ENCODE measurements at regions of chr1 and their contacts with region 1.

Region 1: GRCh38 chr1:165367375-165367993 is 11.0 kb upstream of the LMX1A start:
- DNase-seq: peak; percentile 74 to 79 (median 77)
- ATAC-seq: peak in 3 of 4 donors; percentile 53 to 70 (median 59)
- H3K4me3 ChIP-seq: no peak overlapping the region
- H3K27ac ChIP-seq: no peak overlapping the region
- H3K4me1 ChIP-seq: peaks cover 0 to 17% (median 3%) of the 10 kb centered on the region in 12 donors
- H3K27me3 ChIP-seq: peaks cover 0 to 32% (median 0%) of the 10 kb centered on the region in 9 donors
- CTCF ChIP-seq: peak; percentile 88 to 97 (median 94)
- POLR2A ChIP-seq: no peak

Region 2: DNA sequence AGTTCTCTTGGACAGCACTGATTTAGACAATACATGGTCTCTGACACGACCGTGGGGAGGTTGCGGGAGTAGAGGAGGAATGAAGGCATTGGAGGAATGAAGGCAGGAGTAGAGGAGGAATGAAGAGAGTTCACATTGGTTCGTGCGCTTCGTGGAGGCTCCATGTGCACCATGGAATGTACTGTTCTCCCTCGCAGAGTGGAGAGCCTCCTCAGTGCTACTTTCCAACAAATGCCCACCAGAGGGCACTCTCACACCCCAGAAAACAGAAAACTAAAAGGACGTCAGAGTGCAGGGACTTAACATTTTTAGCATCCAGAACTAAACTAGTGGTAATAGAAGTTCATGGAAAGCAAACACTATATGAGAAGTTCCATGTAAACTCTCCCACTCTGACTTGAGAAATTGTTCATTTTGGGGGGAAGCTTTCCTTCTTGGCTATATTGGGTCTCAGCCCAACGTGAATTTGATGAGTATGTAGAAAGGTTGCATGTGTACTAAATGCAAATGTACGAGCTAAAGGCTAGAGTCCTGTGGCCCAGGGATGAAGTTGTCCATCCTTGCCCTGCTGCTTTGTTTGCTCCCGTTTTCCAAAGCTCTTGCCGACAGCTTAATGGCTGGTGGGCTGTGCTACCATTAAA is 222.6 kb before region 1 on chr1:
- intact Hi-C with region 1: loop called (anchors 2 to 10 kb)
- DNase-seq: peak in 4 of 5 donors; percentile 16 to 37 (median 32)
- ATAC-seq: peak in 3 of 4 donors; percentile 62 to 80 (median 72)
- H3K4me3 ChIP-seq: no peak overlapping the region
- H3K27ac ChIP-seq: no peak overlapping the region
- H3K4me1 ChIP-seq: no peaks in the 10 kb centered on the region
- H3K27me3 ChIP-seq: peaks cover 0 to 49% (median 10%) of the 10 kb centered on the region in 9 donors
- CTCF ChIP-seq: peak; percentile 53 to 79 (median 68)
- POLR2A ChIP-seq: no peak

Region 3: GRCh38 chr1:165152727-165153126 is 214.8 kb before region 1 on chr1:
- intact Hi-C with region 1: loop called in 8 of 10 experiments (anchors 5 to 10 kb)
- DNase-seq: no peak
- ATAC-seq: peak in 1 of 4 donors; percentile 41
- H3K4me3 ChIP-seq: no peak overlapping the region
- H3K27ac ChIP-seq: no peak overlapping the region
- H3K4me1 ChIP-seq: no peaks in the 10 kb centered on the region
- H3K27me3 ChIP-seq: peaks cover 0 to 9% (median 0%) of the 10 kb centered on the region in 9 donors
- CTCF ChIP-seq: peak in 7 of 12 donors; percentile 4 to 27 (median 21)
- POLR2A ChIP-seq: no peak

Region 4: GRCh38 chr1:165257969-165258459 is 109.5 kb before region 1 on chr1:
- intact Hi-C with region 1: loop called in 4 of 10 experiments (anchors 5 to 10 kb)
- DNase-seq: peak in 4 of 5 donors; percentile 56 to 74 (median 64)
- ATAC-seq: peak; percentile 21 to 61 (median 52)
- H3K4me3 ChIP-seq: no peak overlapping the region
- H3K27ac ChIP-seq: no peak overlapping the region
- H3K4me1 ChIP-seq: peaks cover 0 to 4% (median 0%) of the 10 kb centered on the region in 12 donors
- H3K27me3 ChIP-seq: peaks cover 0 to 25% (median 0%) of the 10 kb centered on the region in 9 donors
- CTCF ChIP-seq: peak; percentile 44 to 69 (median 60)
- POLR2A ChIP-seq: no peak

Region 5: DNA sequence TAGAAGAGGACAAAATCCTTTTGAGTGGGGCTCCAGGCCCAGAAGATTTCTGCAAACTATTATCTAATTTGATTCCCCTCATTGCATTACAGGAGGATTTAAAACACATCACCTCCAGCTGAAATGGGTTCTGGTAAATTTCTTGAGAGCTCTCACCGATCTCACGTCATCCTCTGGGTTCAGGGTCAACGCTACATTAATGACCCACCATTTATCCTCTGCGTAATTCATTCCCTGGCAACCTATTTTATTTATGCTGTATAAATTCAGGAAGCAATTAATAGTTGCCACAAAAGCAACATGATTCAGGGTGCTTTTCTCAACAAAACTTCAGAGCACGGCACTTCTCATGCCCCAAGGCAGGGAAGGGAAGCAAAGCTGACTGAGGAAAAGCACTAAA is 49.9 kb before region 1 on chr1:
- intact Hi-C with region 1: no loop called
- DNase-seq: no peak
- ATAC-seq: no peak
- H3K4me3 ChIP-seq: no peak overlapping the region
- H3K27ac ChIP-seq: no peak overlapping the region
- H3K4me1 ChIP-seq: no peaks in the 10 kb centered on the region
- H3K27me3 ChIP-seq: peaks cover 0 to 47% (median 11%) of the 10 kb centered on the region in 9 donors
- CTCF ChIP-seq: no peak
- POLR2A ChIP-seq: no peak